H1 (cell line): ENCODE measurements at regions of chr20 and their contacts with region 1.

Region 1: GRCh38 chr20:45206746-45207145 is at the start of gene SEMG1:
- DNase-seq: no peak
- H3K4me3 ChIP-seq: no peak within 1 kb of the TSS
- H3K27ac ChIP-seq: no peak within 1 kb of the TSS
- H3K4me1 ChIP-seq: peaks cover 3 to 20% (median 13%) of the 10 kb centered on the region in 4 experiments; a peak in 6 of 7 replicates
- H3K27me3 ChIP-seq: no peaks in the 10 kb centered on the region
- CTCF ChIP-seq: no peak
- EP300 ChIP-seq: no peak
- POLR2A ChIP-seq: no peak
- RAD21 ChIP-seq: no peak
- total RNA-seq, gene SEMG1: 4.5 and 5.8 TPM in 2 replicates

Region 2: DNA sequence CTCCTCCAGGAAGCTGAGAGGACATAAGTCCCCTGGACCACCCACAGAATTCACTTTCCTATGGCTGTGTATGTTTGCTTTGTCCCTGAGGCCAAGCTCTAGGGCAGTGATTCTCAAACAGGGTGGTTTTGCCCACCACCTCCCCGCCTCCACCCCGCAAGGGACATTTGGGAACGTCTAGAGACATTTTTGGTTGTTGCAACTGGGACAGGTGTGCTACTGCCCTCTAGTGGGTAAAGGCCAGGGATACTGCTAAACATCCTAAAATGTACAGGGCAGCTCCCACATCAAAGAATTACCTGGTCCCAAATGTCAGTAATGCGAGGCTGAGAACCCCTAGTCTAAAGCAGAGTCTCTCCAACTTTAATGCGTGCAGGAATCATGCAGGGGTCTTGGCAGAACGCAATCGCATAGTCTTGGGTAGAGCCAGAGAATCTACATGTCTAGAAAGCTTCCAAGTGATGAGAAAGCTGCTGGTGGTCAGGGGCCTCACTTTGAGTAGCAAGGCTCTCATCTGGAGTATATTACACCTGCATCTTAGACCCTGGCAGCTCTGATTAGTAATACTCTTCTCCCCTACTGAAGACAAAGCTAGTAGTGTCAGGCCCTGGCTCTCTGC is 110.9 kb before region 1 on chr20:
- CTCF ChIA-PET with region 1: no interaction called
- POLR2A ChIA-PET with region 1: no interaction called
- DNase-seq: peak in 1 of 2 experiments; percentile 76
- H3K4me3 ChIP-seq: no peak overlapping the region
- H3K27ac ChIP-seq: no peak overlapping the region
- H3K4me1 ChIP-seq: peaks cover 0 to 7% (median 2%) of the 10 kb centered on the region in 4 experiments; a peak in 5 of 7 replicates
- H3K27me3 ChIP-seq: peaks cover 5 to 34% (median 28%) of the 10 kb centered on the region in 4 experiments
- CTCF ChIP-seq: peak; percentile 29 to 80 (median 79)
- EP300 ChIP-seq: no peak
- POLR2A ChIP-seq: no peak
- RAD21 ChIP-seq: peak; percentile 85 to 87

Region 3: GRCh38 chr20:45229264-45230056 is 22.7 kb after region 1 on chr20:
- CTCF ChIA-PET with region 1: interaction called, 11 read pairs
- POLR2A ChIA-PET with region 1: no interaction called
- DNase-seq: peak; percentile 21 to 96
- H3K4me3 ChIP-seq: no peak overlapping the region
- H3K27ac ChIP-seq: no peak overlapping the region
- H3K4me1 ChIP-seq: no peaks in the 10 kb centered on the region
- H3K27me3 ChIP-seq: no peaks in the 10 kb centered on the region; a peak in 1 of 7 replicates
- CTCF ChIP-seq: peak; percentile 91 to 97 (median 93)
- EP300 ChIP-seq: no peak
- POLR2A ChIP-seq: no peak
- RAD21 ChIP-seq: peak; percentile 85 to 90

Region 4: GRCh38 chr20:45487231-45487635 is 280.5 kb after region 1 on chr20:
- CTCF ChIA-PET with region 1: no interaction called
- POLR2A ChIA-PET with region 1: no interaction called
- DNase-seq: peak in 1 of 2 experiments; percentile 77
- H3K4me3 ChIP-seq: peak overlapping the region; percentile 38 to 60 (median 43)
- H3K27ac ChIP-seq: no peak overlapping the region
- H3K4me1 ChIP-seq: peaks cover 0 to 11% (median 0%) of the 10 kb centered on the region in 4 experiments; a peak in 2 of 7 replicates
- H3K27me3 ChIP-seq: no peaks in the 10 kb centered on the region
- CTCF ChIP-seq: peak; percentile 26 to 46 (median 46); a peak in 3 of 4 replicates
- EP300 ChIP-seq: no peak
- POLR2A ChIP-seq: no peak
- RAD21 ChIP-seq: peak; percentile 37 to 46